A549 (cell line): ENCODE measurements at regions of chr12 and their contacts with region 1.

Region 1: GRCh38 chr12:57248934-57249742 is 1.8 kb downstream of the STAC3 start:
- DNase-seq: no peak
- ATAC-seq: no peak
- H3K4me3 ChIP-seq: no peak overlapping the region
- H3K27ac ChIP-seq: no peak overlapping the region
- H3K4me1 ChIP-seq: peaks cover 4% of the 10 kb centered on the region; the same call in 1 of the 3 replicates
- CTCF ChIP-seq: no peak
- EP300 ChIP-seq: no peak
- POLR2A ChIP-seq: no peak
- RAD21 ChIP-seq: no peak

Region 2: GRCh38 chr12:57213058-57213715 is 36.0 kb before region 1 on chr12:
- CTCF ChIA-PET with region 1: interaction called, 615 read pairs
- POLR2A ChIA-PET with region 1: interaction called, 3 read pairs
- DNase-seq: peak; percentile 89 to 94
- ATAC-seq: peak; percentile 51 to 75
- H3K4me3 ChIP-seq: no peak overlapping the region
- H3K27ac ChIP-seq: peak overlapping the region in 1 of 2 experiments; percentile 67; a peak in 4 of 6 replicates
- H3K4me1 ChIP-seq: peaks cover 31% of the 10 kb centered on the region
- CTCF ChIP-seq: peak; percentile 90
- EP300 ChIP-seq: no peak
- POLR2A ChIP-seq: no peak
- RAD21 ChIP-seq: peak; percentile 78 to 85

Region 3: DNA sequence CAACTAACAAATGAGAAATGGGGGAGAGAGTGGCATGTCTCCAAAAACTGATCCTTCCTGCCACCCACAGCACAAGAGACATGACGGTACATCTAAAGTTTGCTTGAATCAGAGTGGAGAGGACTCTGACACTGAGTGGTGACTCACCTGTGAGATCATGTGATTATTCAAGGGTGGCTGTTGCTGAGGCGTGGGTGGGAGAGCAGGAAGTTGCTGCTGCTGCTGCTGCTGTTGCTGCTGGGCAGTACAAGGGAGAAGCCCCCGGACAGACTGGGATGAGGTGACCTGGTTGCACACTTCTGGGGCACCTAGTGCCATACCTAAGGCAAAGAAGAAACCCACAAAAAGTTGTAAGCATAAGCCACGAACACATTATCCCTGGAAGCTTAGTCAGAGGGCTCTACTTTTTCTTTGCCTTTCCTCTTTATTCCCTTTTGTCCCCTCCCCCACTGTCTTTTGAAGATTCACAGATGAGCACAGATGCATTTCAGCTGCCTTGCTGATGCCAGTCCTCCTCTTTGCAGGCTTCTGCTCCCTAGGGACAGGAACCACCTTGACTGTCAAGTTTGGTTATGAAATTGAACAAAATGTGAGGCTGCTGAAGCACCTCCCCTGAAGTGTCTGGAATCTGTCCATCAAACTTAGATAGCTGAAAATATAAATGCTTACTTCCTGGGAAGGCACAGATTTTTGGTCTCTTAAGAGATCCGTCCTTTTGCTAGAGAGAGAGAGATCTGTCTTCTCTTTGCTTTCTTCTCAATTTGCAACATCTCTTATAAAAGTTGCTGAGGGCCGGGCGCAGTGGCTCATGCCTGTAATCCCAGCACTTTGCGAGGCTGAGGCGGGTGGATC is 31.3 kb after region 1 on chr12:
- CTCF ChIA-PET with region 1: interaction called, 12 read pairs
- POLR2A ChIA-PET with region 1: no interaction called
- DNase-seq: peak; percentile 78 to 89
- ATAC-seq: peak; percentile 95 to 98
- H3K4me3 ChIP-seq: no peak overlapping the region
- H3K27ac ChIP-seq: peak overlapping the region; percentile 73 to 90
- H3K4me1 ChIP-seq: peaks cover 32% of the 10 kb centered on the region
- CTCF ChIP-seq: no peak
- EP300 ChIP-seq: peak in 1 of 2 experiments; percentile 45; a peak in 2 of 5 replicates
- POLR2A ChIP-seq: peak; percentile 34
- RAD21 ChIP-seq: no peak